B cell (primary cell): ENCODE measurements at regions of chr3 and their contacts with region 1.

Region 1: GRCh38 chr3:112136959-112137693 is 4.1 kb upstream of the GCSAM start:
- DNase-seq: peak; percentile 70
- ATAC-seq: no peak
- H3K4me3 ChIP-seq: no peak overlapping the region
- H3K4me3 Mint-ChIP-seq: peak overlapping the region; percentile 13
- H3K27ac ChIP-seq: no peak overlapping the region
- H3K27ac Mint-ChIP-seq: peak overlapping the region; percentile 15
- H3K4me1 ChIP-seq: peaks cover 51 to 52% of the 10 kb centered on the region in 2 donors
- H3K4me1 Mint-ChIP-seq: peaks cover 56% of the 10 kb centered on the region
- H3K27me3 ChIP-seq: no peaks in the 10 kb centered on the region
- H3K27me3 Mint-ChIP-seq: no peaks in the 10 kb centered on the region
- CTCF ChIP-seq: peak; percentile 75

Region 2: DNA sequence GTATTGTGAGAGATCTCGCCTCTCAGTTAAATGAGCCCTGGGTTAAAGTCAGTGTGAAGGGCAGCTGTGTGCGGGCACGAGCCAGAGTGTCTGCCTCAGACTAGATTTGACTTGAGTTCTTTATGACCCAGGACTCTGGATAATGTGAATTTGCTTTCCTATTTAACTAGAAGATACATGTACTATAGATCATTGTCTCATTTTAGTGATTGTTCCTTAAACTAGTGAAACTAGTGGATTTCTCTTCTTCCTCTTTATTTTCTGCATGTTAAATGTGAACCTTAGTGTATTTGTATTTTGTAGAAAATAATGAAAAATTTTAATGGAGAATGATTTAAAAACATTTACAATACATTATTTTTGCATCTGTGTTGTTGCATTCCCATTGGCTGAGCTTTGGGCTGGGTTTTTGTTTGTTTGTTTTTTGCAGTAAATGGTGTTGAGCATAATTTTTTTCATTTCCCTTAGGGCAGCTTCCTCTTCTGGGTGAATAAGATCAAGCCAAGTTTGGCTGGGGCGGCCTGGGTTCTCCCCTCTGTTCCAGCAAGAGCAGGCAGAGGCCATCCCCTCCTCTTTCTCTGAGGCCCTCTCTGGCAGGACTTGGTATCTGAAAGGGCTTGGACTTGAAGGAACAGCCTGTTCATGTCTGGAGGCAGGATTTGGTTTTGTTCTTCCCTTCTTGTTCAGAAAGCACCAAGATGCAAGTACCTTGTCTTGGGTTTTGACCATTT is 19.1 kb before region 1 on chr3:
- CTCF ChIA-PET with region 1: interaction called, 36 read pairs
- POLR2A ChIA-PET with region 1: no interaction called
- intact Hi-C with region 1: loop called (anchors 1 kb)
- DNase-seq: peak; percentile 82
- ATAC-seq: peak; percentile 62
- H3K4me3 ChIP-seq: peak overlapping the region in 1 of 5 experiments; percentile 18
- H3K4me3 Mint-ChIP-seq: peak overlapping the region; percentile 79
- H3K27ac ChIP-seq: peak overlapping the region; percentile 67 to 78
- H3K27ac Mint-ChIP-seq: peak overlapping the region; percentile 86
- H3K4me1 ChIP-seq: peaks cover 94 to 95% of the 10 kb centered on the region in 2 donors
- H3K4me1 Mint-ChIP-seq: peaks cover 89% of the 10 kb centered on the region
- H3K27me3 ChIP-seq: no peaks in the 10 kb centered on the region
- H3K27me3 Mint-ChIP-seq: no peaks in the 10 kb centered on the region
- CTCF ChIP-seq: peak; percentile 40

Region 3: DNA sequence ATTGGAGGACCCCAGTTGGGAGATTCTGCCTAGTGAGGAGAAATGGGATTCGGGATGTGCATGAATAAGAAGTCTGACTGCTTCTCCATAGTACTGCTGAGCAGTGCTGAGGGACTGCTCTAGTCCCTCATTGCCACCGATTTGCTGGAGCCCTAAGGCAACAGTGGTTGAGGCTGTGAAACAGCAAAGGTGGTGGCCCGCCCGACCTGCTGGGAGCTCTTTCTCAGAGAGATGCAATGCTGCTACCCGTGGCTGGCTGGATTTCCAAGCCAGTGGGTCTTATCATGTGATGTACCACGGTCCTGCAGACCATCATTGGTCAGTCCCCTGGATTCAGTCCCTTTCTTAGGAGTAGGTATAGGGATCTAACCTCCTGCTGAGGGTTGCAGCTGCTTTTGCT is 38.5 kb after region 1 on chr3:
- CTCF ChIA-PET with region 1: no interaction called
- POLR2A ChIA-PET with region 1: no interaction called
- intact Hi-C with region 1: no loop called
- DNase-seq: no peak
- ATAC-seq: no peak
- H3K4me3 ChIP-seq: no peak overlapping the region
- H3K4me3 Mint-ChIP-seq: no peak overlapping the region
- H3K27ac ChIP-seq: no peak overlapping the region
- H3K27ac Mint-ChIP-seq: no peak overlapping the region
- H3K4me1 ChIP-seq: no peaks in the 10 kb centered on the region
- H3K4me1 Mint-ChIP-seq: no peaks in the 10 kb centered on the region
- H3K27me3 ChIP-seq: no peaks in the 10 kb centered on the region
- H3K27me3 Mint-ChIP-seq: no peaks in the 10 kb centered on the region
- CTCF ChIP-seq: no peak

Region 4: DNA sequence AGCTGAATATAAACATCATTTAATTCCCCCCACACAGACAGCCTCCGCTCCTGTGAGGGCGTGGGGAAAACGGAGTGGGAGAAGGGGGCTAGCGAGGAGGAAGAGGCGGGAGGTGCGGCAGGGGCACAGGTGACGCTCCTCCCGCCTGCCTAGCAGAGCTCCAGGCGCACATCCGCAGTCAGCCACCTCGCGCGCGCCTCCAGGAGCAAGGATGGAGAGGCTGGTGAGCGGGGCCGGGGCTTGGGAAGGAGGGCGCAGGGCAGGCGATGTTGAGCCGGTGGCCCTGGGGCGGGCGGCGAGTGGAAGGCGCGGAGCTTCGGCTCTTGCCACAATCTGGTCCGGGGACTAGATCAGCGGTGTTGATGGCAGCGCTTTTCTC is 195.9 kb after region 1 on chr3 and contains the start of gene CD200:
- CTCF ChIA-PET with region 1: interaction called, 8 read pairs
- POLR2A ChIA-PET with region 1: no interaction called
- intact Hi-C with region 1: loop called (anchors 2 kb)
- DNase-seq: peak; percentile 64
- ATAC-seq: peak; percentile 77
- H3K4me3 ChIP-seq: peak within 1 kb of the TSS; percentile 65 to 93 (median 89)
- H3K4me3 Mint-ChIP-seq: peak within 1 kb of the TSS; percentile 94
- H3K27ac ChIP-seq: peak within 1 kb of the TSS; percentile 70 to 83
- H3K27ac Mint-ChIP-seq: peak within 1 kb of the TSS; percentile 95
- H3K4me1 ChIP-seq: peaks cover 29 to 31% of the 10 kb centered on the region in 2 donors
- H3K4me1 Mint-ChIP-seq: peaks cover 50% of the 10 kb centered on the region
- H3K27me3 ChIP-seq: no peaks in the 10 kb centered on the region
- H3K27me3 Mint-ChIP-seq: no peaks in the 10 kb centered on the region
- CTCF ChIP-seq: no peak
- total RNA-seq, gene CD200: 35.0 and 36.0 TPM in 2 replicates

Region 5: DNA sequence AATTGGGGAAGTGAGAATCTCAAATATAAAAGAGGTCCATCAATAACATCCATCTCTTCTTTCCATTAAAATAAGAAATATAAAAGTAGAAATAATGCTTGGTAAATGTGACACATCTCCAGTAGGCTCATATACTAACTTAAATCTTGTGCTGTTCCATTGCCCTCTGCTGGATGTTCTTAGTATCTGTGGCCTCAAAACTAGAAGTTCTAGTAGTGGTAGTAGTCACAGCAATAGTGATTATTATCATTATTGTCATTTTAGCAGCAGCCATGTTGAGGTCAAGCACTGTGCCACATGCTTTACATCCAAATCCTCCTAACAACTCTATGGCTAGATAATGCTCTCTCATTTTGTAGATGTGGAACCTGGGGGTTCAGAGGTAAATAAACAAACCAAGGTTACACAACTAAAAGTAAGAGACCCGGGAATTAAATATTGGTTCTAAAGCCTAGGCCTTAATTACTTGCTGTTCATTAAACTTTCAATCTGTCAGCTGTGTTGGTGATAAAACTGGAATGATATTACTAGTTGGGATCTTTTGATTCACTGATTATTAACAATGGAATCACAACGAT is 382.4 kb after region 1 on chr3:
- CTCF ChIA-PET with region 1: interaction called, 15 read pairs
- POLR2A ChIA-PET with region 1: no interaction called
- intact Hi-C with region 1: loop called (anchors 1 kb)
- DNase-seq: peak; percentile 79
- ATAC-seq: peak; percentile 86
- H3K4me3 ChIP-seq: no peak overlapping the region
- H3K4me3 Mint-ChIP-seq: peak overlapping the region; percentile 49
- H3K27ac ChIP-seq: peak overlapping the region in 1 of 2 donors; percentile 74
- H3K27ac Mint-ChIP-seq: peak overlapping the region; percentile 87
- H3K4me1 ChIP-seq: peaks cover 21 to 32% of the 10 kb centered on the region in 2 donors
- H3K4me1 Mint-ChIP-seq: peaks cover 35% of the 10 kb centered on the region
- H3K27me3 ChIP-seq: no peaks in the 10 kb centered on the region
- H3K27me3 Mint-ChIP-seq: no peaks in the 10 kb centered on the region
- CTCF ChIP-seq: peak; percentile 89

Region 6: DNA sequence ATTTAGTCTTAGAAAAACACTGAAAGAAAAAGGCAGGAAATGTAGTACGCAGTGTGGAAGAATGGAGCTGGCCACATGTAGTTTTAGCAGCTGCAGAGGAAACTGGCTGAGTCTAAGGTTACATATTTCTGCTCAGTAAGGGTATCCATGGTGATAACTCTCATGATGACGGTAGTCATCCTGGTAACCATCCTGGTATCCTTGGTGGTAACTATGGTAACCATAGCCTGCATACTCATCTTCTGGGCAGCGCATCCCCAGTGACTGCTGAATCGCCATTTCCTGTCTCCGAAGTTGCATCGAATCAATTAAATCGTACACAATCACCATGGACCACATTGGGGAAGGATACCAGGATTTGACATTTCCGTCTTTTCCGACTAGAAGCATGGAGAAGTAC is 468.2 kb after region 1 on chr3:
- CTCF ChIA-PET with region 1: no interaction called
- POLR2A ChIA-PET with region 1: no interaction called
- intact Hi-C with region 1: no loop called
- DNase-seq: no peak
- ATAC-seq: no peak
- H3K4me3 ChIP-seq: no peak overlapping the region
- H3K4me3 Mint-ChIP-seq: no peak overlapping the region
- H3K27ac ChIP-seq: no peak overlapping the region
- H3K27ac Mint-ChIP-seq: no peak overlapping the region
- H3K4me1 ChIP-seq: no peaks in the 10 kb centered on the region
- H3K4me1 Mint-ChIP-seq: peaks cover 7% of the 10 kb centered on the region
- H3K27me3 ChIP-seq: no peaks in the 10 kb centered on the region
- H3K27me3 Mint-ChIP-seq: peaks cover 4% of the 10 kb centered on the region
- CTCF ChIP-seq: no peak

Region 7: GRCh38 chr3:112990672-112991602 is 853.8 kb after region 1 on chr3 and contains the start of gene GTPBP8:
- CTCF ChIA-PET with region 1: no interaction called
- POLR2A ChIA-PET with region 1: no interaction called
- intact Hi-C with region 1: loop called (anchors 5 kb)
- DNase-seq: peak; percentile 92
- ATAC-seq: peak; percentile 84
- H3K4me3 ChIP-seq: peak within 1 kb of the TSS; percentile 63 to 89 (median 76)
- H3K4me3 Mint-ChIP-seq: peak within 1 kb of the TSS; percentile 95
- H3K27ac ChIP-seq: peak within 1 kb of the TSS; percentile 82 to 98
- H3K27ac Mint-ChIP-seq: peak within 1 kb of the TSS; percentile 98
- H3K4me1 ChIP-seq: peaks cover 11 to 12% of the 10 kb centered on the region in 2 donors
- H3K4me1 Mint-ChIP-seq: peaks cover 30% of the 10 kb centered on the region
- H3K27me3 ChIP-seq: no peaks in the 10 kb centered on the region
- H3K27me3 Mint-ChIP-seq: no peaks in the 10 kb centered on the region
- CTCF ChIP-seq: no peak
- total RNA-seq, gene GTPBP8: 23.4 and 23.5 TPM in 2 replicates